Heart right ventricle (tissue), 16 donors: ENCODE measurements at regions of chr3 and their contacts with region 1.

Region 1: DNA sequence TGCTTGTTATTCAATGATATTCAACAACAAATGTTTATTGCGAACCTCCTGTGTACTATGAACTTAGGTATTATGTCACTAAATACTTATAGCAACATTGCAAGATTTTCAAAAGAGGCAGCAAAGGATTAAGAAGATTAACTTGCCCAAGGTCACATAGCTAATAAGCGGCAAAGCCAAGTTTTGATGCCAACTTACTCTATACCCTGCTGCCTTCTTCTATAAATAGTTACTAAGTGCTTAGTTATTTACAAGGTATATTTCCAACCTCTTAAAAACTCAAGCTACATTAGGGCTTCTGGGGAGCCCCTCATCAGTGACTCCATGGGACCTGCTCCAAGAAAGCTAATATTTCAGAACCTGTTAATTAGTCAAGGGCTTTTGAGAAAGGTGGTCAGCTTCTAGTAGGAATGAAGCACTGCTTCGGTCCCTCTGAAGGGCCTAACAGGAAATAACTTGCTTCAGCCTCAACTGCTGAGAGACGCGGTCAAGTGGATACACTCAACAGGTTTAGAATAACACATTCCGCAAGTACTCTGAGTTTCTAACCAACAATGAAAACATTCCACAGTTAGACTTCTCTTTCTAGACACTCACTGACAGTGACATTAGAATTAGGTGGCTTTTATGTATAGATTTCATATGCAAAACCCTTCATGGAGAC is 125.5 kb downstream of the DGKG start:
- DNase-seq: no peak
- ATAC-seq: peak; percentile 41 to 90 (median 70)
- H3K4me3 ChIP-seq: no peak overlapping the region
- H3K27ac ChIP-seq: peak overlapping the region; percentile 12 to 79 (median 69)
- H3K4me1 ChIP-seq: peaks cover 0 to 42% (median 20%) of the 10 kb centered on the region in 9 donors
- H3K27me3 ChIP-seq: no peaks in the 10 kb centered on the region
- CTCF ChIP-seq: no peak

Region 2: DNA sequence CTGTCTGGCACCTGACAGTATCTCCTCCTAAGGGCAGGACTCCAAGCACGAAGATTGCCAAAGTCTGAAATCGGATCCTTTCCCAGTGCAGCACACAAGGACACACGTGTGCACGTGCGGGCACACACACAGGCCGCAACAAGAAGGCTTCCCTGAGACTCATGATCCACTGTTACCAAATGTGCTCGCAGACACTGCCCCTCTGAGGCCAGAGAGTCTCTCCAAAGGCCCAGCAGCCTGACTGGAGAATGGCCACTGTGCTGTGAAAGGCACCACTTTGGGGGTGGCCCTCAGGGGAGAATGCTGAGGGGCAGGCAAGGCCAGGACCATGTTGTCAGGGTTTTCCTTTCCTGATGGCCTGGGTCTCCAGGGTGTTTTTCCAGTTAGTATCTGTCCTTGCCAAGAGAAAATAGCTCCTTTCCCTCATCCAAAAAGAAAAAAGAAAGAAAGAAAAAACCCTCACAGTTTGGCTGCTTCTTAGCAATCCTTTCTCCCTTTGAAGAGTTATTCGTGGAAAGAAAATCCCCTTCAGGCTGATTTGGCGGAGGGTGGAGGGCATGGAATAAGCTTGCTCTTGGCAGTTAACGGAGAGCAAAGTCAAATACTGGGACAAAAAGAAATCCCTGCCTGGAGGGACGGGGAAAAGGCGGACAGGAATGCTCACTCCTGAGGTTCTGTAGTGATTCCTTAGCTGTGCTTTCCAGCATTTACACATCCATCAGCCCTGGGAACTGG is 15.4 kb before region 1 on chr3:
- intact Hi-C with region 1: loop called in 1 of 10 experiments (anchors 2 kb)
- DNase-seq: no peak
- ATAC-seq: peak in 7 of 8 donors; percentile 55 to 69 (median 61)
- H3K4me3 ChIP-seq: no peak overlapping the region
- H3K27ac ChIP-seq: peak overlapping the region in 7 of 10 donors; percentile 15 to 66 (median 52)
- H3K4me1 ChIP-seq: peaks cover 4 to 55% (median 22%) of the 10 kb centered on the region in 9 donors
- H3K27me3 ChIP-seq: peaks cover 0 to 5% (median 0%) of the 10 kb centered on the region in 7 donors
- CTCF ChIP-seq: peak in 5 of 9 donors; percentile 7 to 41 (median 26)